Heart left ventricle (tissue), 16 donors: ENCODE measurements at regions of chr16 and their contacts with region 1.

Region 1: DNA sequence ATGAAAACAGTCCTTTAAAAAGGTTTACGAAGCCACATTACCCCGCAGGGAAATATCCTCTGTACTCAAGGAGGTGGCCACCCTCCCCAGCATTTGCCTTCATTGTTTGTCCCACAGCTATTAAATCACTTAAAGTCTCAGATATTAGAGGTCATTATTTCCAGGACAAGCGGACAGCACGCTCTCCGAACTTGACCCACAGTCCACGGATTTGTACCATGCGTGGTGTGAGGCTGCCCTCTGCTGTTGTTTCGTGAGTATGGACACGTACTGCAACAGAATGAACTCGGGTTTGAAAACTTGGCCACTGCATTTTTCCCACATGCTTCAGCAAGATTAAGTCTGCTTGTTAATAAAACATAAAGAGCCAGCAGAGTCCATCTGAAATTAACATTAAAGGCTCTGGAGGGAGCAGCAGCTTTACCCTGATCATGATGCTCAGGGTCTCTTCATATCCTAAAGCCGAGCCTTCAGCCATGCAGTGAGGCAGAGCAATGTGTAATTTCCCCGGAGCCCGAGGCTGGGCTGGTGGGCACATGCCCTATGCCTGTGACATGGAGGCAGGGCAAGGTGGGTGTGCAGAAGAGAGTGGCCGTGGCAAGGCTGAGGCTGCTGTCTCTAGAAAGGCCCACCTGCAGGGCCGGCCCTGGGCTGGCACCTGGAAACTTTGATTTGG is 19.7 kb downstream of the MEAK7 start:
- DNase-seq: peak; percentile 53 to 77 (median 67)
- ATAC-seq: peak in 3 of 4 donors; percentile 79 to 89 (median 83)
- H3K4me3 ChIP-seq: no peak overlapping the region
- H3K27ac ChIP-seq: no peak overlapping the region
- H3K4me1 ChIP-seq: peaks cover 0 to 8% (median 0%) of the 10 kb centered on the region in 12 donors
- H3K27me3 ChIP-seq: no peaks in the 10 kb centered on the region
- CTCF ChIP-seq: peak; percentile 69 to 87 (median 83)
- POLR2A ChIP-seq: no peak

Region 2: GRCh38 chr16:83967806-83968305 is 516.9 kb before region 1 on chr16 and contains the start of gene NECAB2:
- intact Hi-C with region 1: loop called in 3 of 10 experiments (anchors 5 to 10 kb)
- DNase-seq: peak in 4 of 5 donors; percentile 58 to 75 (median 65)
- ATAC-seq: peak in 2 of 4 donors; percentile 30 to 40
- H3K4me3 ChIP-seq: peak within 1 kb of the TSS in 10 of 12 donors; percentile 26 to 56 (median 44)
- H3K27ac ChIP-seq: no peak within 1 kb of the TSS
- H3K4me1 ChIP-seq: peaks cover 0 to 9% (median 0%) of the 10 kb centered on the region in 12 donors
- H3K27me3 ChIP-seq: peaks cover 0 to 10% (median 0%) of the 10 kb centered on the region in 9 donors
- CTCF ChIP-seq: peak; percentile 36 to 81 (median 68)
- POLR2A ChIP-seq: no peak
- total RNA-seq, gene NECAB2: 0.24 to 1.3 (median 0.77) TPM in 7 of 9 donors, not detected in the others

Region 3: GRCh38 chr16:84084570-84085270 is 400.0 kb before region 1 on chr16:
- intact Hi-C with region 1: loop called in 6 of 10 experiments (anchors 5 to 10 kb)
- DNase-seq: peak in 4 of 5 donors; percentile 39 to 71 (median 64)
- ATAC-seq: peak in 2 of 4 donors; percentile 31 to 38
- H3K4me3 ChIP-seq: no peak overlapping the region
- H3K27ac ChIP-seq: peak overlapping the region in 8 of 12 donors; percentile 17 to 86 (median 64)
- H3K4me1 ChIP-seq: peaks cover 0 to 54% (median 17%) of the 10 kb centered on the region in 12 donors
- H3K27me3 ChIP-seq: no peaks in the 10 kb centered on the region
- CTCF ChIP-seq: peak; percentile 49 to 74 (median 62)
- POLR2A ChIP-seq: no peak

Region 4: GRCh38 chr16:84194470-84195200 is 290.1 kb before region 1 on chr16:
- intact Hi-C with region 1: loop called in 3 of 10 experiments (anchors 10 kb)
- DNase-seq: no peak
- ATAC-seq: peak in 1 of 4 donors; percentile 38
- H3K4me3 ChIP-seq: peak overlapping the region in 1 of 12 donors; percentile 8
- H3K27ac ChIP-seq: no peak overlapping the region
- H3K4me1 ChIP-seq: peaks cover 0 to 14% (median 0%) of the 10 kb centered on the region in 12 donors
- H3K27me3 ChIP-seq: peaks cover 0 to 10% (median 0%) of the 10 kb centered on the region in 9 donors
- CTCF ChIP-seq: no peak
- POLR2A ChIP-seq: no peak

Region 5: DNA sequence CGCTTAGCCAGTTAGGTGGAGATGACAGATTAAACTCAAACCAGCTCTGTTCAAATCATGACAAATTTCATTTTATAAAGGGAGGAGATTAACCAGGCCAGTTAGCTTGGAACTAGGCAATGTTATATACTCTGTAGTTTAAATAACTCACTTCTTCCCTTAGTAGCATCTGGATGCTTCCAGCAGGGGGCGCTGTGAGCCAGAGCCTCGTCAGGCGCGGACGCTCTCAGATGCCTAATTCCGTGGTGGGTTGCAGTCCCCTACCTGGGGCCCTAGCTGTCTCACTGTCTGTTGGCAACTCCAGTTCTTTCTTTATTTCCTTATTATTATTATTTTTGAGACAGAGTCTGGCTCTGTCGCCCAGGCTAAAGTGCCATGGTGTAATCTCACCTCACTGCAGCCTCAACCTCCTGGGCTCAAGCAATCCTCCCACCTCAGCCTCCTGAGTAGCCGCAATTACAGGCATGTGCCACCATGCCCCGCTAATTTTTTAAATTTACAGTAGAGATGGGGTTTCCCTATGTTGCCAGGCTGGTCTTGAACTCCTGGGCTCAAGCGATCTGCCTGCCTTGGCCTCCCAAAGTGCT is 207.4 kb before region 1 on chr16:
- intact Hi-C with region 1: loop called (anchors 1 to 2 kb)
- DNase-seq: peak; percentile 52 to 78 (median 66)
- ATAC-seq: peak in 3 of 4 donors; percentile 69 to 73 (median 71)
- H3K4me3 ChIP-seq: no peak overlapping the region
- H3K27ac ChIP-seq: no peak overlapping the region
- H3K4me1 ChIP-seq: no peaks in the 10 kb centered on the region
- H3K27me3 ChIP-seq: peaks cover 0 to 24% (median 0%) of the 10 kb centered on the region in 9 donors
- CTCF ChIP-seq: peak; percentile 73 to 95 (median 89)
- POLR2A ChIP-seq: no peak